ENCODE measurements at regions of chr15 and their contacts with region 1.

Region 1: DNA sequence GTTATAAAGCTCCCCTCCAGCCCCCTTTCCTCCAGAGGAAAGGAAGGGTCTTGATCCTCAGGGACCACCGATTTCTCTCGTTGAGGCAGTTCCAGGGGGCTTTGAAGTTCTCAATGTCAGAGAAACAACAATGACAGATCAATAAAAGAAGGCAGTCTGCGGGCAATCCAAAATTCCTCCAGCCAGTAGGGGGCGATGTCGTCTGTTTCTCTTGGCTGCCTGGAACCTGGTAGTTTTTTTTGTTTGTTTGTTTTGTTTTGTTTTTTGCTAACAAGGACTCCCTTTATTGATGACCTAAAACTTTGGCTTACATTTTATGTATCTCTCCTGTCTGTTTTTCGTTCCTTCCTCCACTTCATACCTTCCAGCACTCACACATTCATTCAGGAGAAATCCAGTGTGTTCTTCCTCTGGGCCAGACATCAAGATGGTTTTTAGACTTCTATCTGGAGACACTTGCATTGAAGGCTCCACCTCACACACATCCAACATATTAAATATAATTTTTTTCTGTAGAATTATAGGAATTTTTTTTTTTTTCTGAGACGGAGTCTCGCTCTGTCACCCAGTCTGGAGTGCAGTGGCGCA is 276.6 kb downstream of the RPLP1 start:
- DNase-seq: no peak
- H3K4me3 ChIP-seq: no peak overlapping the region
- H3K27ac ChIP-seq: no peak overlapping the region
- H3K4me1 ChIP-seq: no peaks in the 10 kb centered on the region
- H3K27me3 ChIP-seq: peaks cover 2% of the 10 kb centered on the region
- CTCF ChIP-seq: peak; percentile 73

Region 2: DNA sequence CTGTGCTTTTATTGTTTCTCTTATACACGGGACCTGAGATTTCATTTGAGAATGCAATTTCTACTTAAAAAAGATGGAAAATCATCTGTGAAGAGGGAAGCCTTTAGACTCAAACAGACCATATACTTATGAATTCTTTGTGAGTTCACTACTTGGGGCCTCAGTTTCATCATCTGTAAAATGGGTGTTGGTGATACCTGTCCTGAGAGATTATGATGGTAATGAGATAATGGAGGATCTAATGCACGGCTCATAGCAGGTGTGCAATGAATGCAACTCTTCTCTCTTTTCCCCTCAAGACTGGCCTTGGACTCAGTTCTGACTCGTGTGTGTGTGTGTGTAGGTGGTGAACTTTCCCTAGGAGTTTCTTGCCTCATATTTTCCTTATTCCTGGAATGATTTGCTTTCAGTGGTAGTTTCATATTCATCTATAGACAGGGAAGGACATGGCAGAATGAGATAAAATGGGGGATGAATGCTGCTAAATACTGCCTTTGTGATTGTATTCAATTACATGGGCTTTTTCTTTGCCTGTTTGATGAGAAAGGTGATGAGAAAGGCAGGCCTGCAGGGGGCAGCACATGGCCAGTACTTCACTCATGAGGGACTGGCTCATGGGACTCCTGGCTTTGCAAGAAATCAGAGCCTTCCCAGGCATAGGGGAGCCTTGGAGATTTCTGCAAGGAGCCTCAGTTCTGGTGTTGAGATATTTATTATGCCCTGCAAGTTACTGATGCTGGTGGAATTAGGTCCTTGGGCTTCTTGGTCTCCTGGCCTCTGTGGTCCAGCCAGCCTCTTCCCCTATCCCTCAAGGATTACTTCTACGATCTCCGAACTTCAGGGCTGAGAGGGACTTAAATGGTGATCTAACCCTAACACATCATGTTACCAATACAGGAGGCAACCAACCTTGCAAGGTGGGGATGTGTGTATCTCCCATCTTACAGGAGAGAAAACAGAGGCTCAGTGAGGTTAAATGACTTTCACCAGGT is 205.9 kb before region 1 on chr15:
- CTCF ChIA-PET with region 1: no interaction called
- dilution Hi-C with region 1: no loop called
- in situ Hi-C with region 1: loop called in 1 of 2 experiments (anchors 25 kb)
- intact Hi-C with region 1: loop called (anchors 10 kb)
- DNase-seq: peak; percentile 50
- H3K4me3 ChIP-seq: no peak overlapping the region
- H3K27ac ChIP-seq: no peak overlapping the region
- H3K4me1 ChIP-seq: no peaks in the 10 kb centered on the region
- H3K27me3 ChIP-seq: no peaks in the 10 kb centered on the region
- CTCF ChIP-seq: peak; percentile 79 to 80

Region 3: DNA sequence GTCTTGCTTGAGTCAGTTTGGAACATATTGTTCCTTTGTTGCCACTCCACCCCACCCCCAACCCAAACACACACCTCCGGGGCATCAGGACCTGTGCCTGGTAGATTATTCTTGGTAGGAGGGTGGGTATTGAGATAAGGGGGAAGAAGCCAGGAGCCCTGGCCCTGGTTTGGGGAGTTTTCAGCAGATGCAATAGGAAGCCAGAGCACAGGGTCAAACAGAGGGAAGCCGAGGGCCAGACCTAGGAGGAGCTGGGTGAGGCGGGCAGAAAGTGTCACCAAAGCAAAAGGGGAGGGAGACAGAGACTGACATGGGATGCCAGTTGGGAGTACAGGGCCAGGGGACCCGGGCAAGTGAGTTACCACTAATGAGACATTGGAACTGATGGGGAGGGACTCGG is 113.5 kb before region 1 on chr15:
- CTCF ChIA-PET with region 1: no interaction called
- dilution Hi-C with region 1: no loop called
- in situ Hi-C with region 1: no loop called
- intact Hi-C with region 1: no loop called
- DNase-seq: no peak
- H3K4me3 ChIP-seq: no peak overlapping the region
- H3K27ac ChIP-seq: no peak overlapping the region
- H3K4me1 ChIP-seq: no peaks in the 10 kb centered on the region
- H3K27me3 ChIP-seq: peaks cover 4% of the 10 kb centered on the region
- CTCF ChIP-seq: no peak

Region 4: GRCh38 chr15:69853581-69853980 is 124.3 kb after region 1 on chr15:
- CTCF ChIA-PET with region 1: no interaction called
- dilution Hi-C with region 1: no loop called
- in situ Hi-C with region 1: no loop called
- intact Hi-C with region 1: no loop called
- DNase-seq: peak; percentile 36
- H3K4me3 ChIP-seq: no peak overlapping the region
- H3K27ac ChIP-seq: no peak overlapping the region
- H3K4me1 ChIP-seq: no peaks in the 10 kb centered on the region
- H3K27me3 ChIP-seq: peaks cover 2% of the 10 kb centered on the region
- CTCF ChIP-seq: no peak

Region 5: GRCh38 chr15:70362886-70363285 is 633.6 kb after region 1 on chr15:
- CTCF ChIA-PET with region 1: no interaction called
- dilution Hi-C with region 1: no loop called
- in situ Hi-C with region 1: no loop called
- intact Hi-C with region 1: loop called (anchors 5 kb)
- DNase-seq: no peak
- H3K4me3 ChIP-seq: no peak overlapping the region
- H3K27ac ChIP-seq: no peak overlapping the region
- H3K4me1 ChIP-seq: no peaks in the 10 kb centered on the region
- H3K27me3 ChIP-seq: no peaks in the 10 kb centered on the region
- CTCF ChIP-seq: peak; percentile 31 to 58